ENCODE measurements at regions of chr1 and their contacts with region 1.

Region 1: GRCh38 chr1:32394141-32394889 is at the start of gene BSDC1:
- DNase-seq: peak; percentile 100

Region 2: GRCh38 chr1:32335790-32336590 is 58.3 kb before region 1 on chr1 and contains the start of gene MARCKSL1:
- CTCF ChIA-PET with region 1: no interaction called
- POLR2A ChIA-PET with region 1: interaction called, 12 read pairs
- DNase-seq: peak; percentile 93

Measured in HEK293T (cell line).